ENCODE measurements at regions of chr13 and their contacts with region 1.

Region 1: DNA sequence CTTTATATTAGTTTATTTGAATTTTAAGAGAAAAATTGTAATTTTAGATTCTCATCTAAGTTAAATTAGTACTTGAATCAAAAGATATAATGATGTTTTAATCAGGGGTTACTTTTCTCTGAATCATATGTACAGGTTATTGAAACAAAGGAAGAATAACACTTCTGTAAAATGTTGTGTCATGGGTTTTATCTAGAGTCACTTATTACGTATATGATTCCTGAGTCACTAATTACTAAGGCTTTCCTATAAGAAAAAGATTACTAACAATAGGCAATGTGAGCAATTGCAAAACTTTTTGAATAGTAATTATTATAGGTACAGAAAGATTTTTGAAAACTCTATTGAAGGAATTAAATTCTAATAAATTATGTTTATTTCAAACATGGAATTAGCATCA is 99.2 kb upstream of the KLF5 start:
- DNase-seq: no peak
- ATAC-seq: no peak
- H3K4me3 ChIP-seq: no peak overlapping the region
- H3K4me3 Mint-ChIP-seq: no peak overlapping the region
- H3K27ac ChIP-seq: no peak overlapping the region
- H3K27ac Mint-ChIP-seq: no peak overlapping the region
- H3K4me1 ChIP-seq: no peaks in the 10 kb centered on the region
- H3K4me1 Mint-ChIP-seq: no peaks in the 10 kb centered on the region
- H3K27me3 ChIP-seq: no peaks in the 10 kb centered on the region
- H3K27me3 Mint-ChIP-seq: no peaks in the 10 kb centered on the region
- CTCF ChIP-seq: no peak

Region 2: DNA sequence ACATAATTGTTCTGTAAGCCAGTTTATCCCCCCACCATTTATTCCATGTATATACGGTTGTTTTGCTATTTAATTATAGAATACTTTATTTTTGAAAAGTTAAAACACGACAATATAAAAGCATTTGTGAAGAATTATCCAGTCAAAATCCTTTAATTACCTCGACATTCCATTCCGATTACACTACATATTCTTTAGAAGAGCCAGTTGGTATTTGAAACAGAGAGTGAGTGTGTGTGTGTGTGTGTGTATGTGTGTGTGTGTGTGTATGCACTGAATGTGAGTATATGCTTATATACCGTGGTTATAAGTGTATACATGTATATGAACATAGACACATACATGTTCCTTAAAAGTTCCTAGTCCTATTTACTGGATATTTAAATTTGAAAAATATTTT is 11.3 kb after region 1 on chr13:
- CTCF ChIA-PET with region 1: no interaction called
- POLR2A ChIA-PET with region 1: no interaction called
- intact Hi-C with region 1: loop called in 1 of 2 experiments (anchors 2 kb)
- DNase-seq: no peak
- ATAC-seq: no peak
- H3K4me3 ChIP-seq: no peak overlapping the region
- H3K4me3 Mint-ChIP-seq: no peak overlapping the region
- H3K27ac ChIP-seq: no peak overlapping the region
- H3K27ac Mint-ChIP-seq: no peak overlapping the region
- H3K4me1 ChIP-seq: no peaks in the 10 kb centered on the region
- H3K4me1 Mint-ChIP-seq: no peaks in the 10 kb centered on the region
- H3K27me3 ChIP-seq: no peaks in the 10 kb centered on the region
- H3K27me3 Mint-ChIP-seq: no peaks in the 10 kb centered on the region
- CTCF ChIP-seq: no peak